PC-3 (cell line): ENCODE measurements at regions of chr3 and their contacts with region 1.

Region 1: GRCh38 chr3:187745201-187746058 is at the start of gene BCL6:
- DNase-seq: peak; percentile 98
- ATAC-seq: peak; percentile 34
- H3K4me3 ChIP-seq: peak within 1 kb of the TSS; percentile 93
- H3K27ac ChIP-seq: peak within 1 kb of the TSS; percentile 91
- H3K4me1 ChIP-seq: peaks cover 43% of the 10 kb centered on the region
- H3K27me3 ChIP-seq: no peaks in the 10 kb centered on the region
- CTCF ChIP-seq: no peak
- total RNA-seq, gene BCL6: 7.7 and 11.8 TPM in 2 replicates

Region 2: GRCh38 chr3:187398955-187399354 is 346.5 kb before region 1 on chr3:
- CTCF ChIA-PET with region 1: no interaction called
- POLR2A ChIA-PET with region 1: no interaction called
- intact Hi-C with region 1: no loop called
- DNase-seq: no peak
- ATAC-seq: no peak
- H3K4me3 ChIP-seq: no peak overlapping the region
- H3K27ac ChIP-seq: no peak overlapping the region
- H3K4me1 ChIP-seq: peaks cover 10% of the 10 kb centered on the region
- H3K27me3 ChIP-seq: peaks cover 20% of the 10 kb centered on the region
- CTCF ChIP-seq: no peak

Region 3: DNA sequence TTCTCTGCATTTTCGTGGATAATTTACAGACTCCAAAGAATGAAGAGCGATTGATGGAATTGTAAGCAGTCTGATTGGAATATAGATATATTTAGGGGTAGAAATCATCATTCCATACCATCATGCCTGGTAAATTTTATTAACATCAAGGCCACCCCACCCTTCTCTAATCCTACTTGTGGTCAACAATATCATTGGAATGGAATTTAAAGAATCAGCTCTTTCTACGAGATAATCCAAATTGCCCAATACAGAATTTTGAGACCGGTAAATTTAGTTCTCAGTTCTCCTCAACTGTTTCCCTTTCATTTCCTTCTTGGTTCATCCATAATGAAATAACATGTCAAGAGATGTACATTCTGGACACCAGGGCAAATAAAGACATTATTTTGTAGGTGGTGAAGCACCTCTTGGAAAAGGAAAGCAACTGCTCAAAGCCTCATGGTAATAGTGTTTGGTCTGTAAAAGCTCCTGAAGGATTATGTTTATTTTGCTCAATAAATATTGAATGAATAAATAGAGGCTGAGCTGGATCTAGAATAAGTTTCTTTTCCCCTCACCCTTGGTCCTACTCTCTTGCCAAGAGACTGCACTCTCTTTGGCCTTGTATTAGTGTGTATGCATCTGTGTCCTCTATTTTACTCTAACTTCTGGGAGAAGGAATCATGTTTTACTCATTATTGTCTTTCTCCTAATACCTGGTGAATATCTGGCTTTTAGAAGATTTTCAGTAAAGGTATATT is 133.5 kb after region 1 on chr3:
- CTCF ChIA-PET with region 1: interaction called, 4 read pairs
- POLR2A ChIA-PET with region 1: no interaction called
- intact Hi-C with region 1: loop called (anchors 2 kb)
- DNase-seq: peak; percentile 87
- ATAC-seq: peak; percentile 89
- H3K4me3 ChIP-seq: peak overlapping the region; percentile 54
- H3K27ac ChIP-seq: peak overlapping the region; percentile 56
- H3K4me1 ChIP-seq: peaks cover 40% of the 10 kb centered on the region
- H3K27me3 ChIP-seq: no peaks in the 10 kb centered on the region
- CTCF ChIP-seq: no peak

Region 4: DNA sequence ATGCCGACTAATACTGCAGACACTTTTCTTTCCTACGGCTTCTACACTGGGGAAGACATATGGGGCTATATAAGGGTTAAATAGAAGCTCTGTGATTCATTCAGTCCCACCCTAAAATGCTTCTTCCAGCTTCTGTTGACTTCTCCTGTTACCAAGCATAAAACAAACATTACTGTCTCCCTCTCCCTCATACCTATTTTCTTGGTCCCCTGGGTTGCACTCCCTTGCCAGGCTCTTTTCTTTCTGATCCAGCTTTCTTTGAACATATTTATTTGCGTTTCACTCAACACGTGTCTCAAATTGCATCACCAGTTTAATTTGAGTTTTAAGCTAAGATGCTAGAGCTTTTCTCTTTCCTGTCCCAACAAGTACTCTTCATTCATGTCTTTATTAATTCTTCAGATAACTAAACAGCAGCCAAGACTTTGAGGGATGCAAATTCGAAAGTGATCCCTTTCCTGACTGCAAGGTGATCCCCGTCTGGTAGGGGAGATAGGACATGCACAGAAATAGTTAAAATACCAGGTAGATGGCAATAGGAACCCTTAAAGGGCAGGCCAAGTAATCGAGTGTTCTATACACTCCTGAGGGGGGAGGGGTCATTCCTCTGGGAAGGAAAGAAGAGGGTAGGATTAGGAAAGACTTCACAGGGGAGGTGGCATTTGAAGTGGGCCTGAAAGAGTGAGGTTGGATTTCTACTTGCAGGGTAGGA is 198.4 kb after region 1 on chr3:
- CTCF ChIA-PET with region 1: interaction called, 8 read pairs
- POLR2A ChIA-PET with region 1: interaction called, 4 read pairs
- intact Hi-C with region 1: loop called (anchors 1 kb)
- DNase-seq: peak; percentile 85
- ATAC-seq: peak; percentile 87
- H3K4me3 ChIP-seq: peak overlapping the region; percentile 57
- H3K27ac ChIP-seq: peak overlapping the region; percentile 80
- H3K4me1 ChIP-seq: peaks cover 44% of the 10 kb centered on the region
- H3K27me3 ChIP-seq: no peaks in the 10 kb centered on the region
- CTCF ChIP-seq: no peak

Region 5: GRCh38 chr3:188133219-188133618 is 387.8 kb after region 1 on chr3:
- CTCF ChIA-PET with region 1: no interaction called
- POLR2A ChIA-PET with region 1: interaction called, 5 read pairs
- intact Hi-C with region 1: loop called (anchors 1 kb)
- DNase-seq: peak; percentile 53
- ATAC-seq: 0 out of 2 replicates have a peak, but pooled peaks have one; percentile 19
- H3K4me3 ChIP-seq: no peak overlapping the region
- H3K27ac ChIP-seq: peak overlapping the region; percentile 17; the same call in 1 of the 2 replicates
- H3K4me1 ChIP-seq: 0 out of 2 replicates have a peak, but pooled peaks cover 6% of the 10 kb centered on the region
- H3K27me3 ChIP-seq: no peaks in the 10 kb centered on the region
- CTCF ChIP-seq: no peak

Region 6: GRCh38 chr3:188230962-188231361 is 485.5 kb after region 1 on chr3:
- CTCF ChIA-PET with region 1: no interaction called
- POLR2A ChIA-PET with region 1: interaction called, 4 read pairs
- intact Hi-C with region 1: loop called (anchors 1 kb)
- DNase-seq: peak; percentile 85
- ATAC-seq: peak; percentile 65
- H3K4me3 ChIP-seq: no peak overlapping the region
- H3K27ac ChIP-seq: peak overlapping the region; percentile 78
- H3K4me1 ChIP-seq: peaks cover 51% of the 10 kb centered on the region
- H3K27me3 ChIP-seq: no peaks in the 10 kb centered on the region
- CTCF ChIP-seq: no peak

Region 7: GRCh38 chr3:188683032-188683521 is 937.6 kb after region 1 on chr3:
- CTCF ChIA-PET with region 1: interaction called, 18 read pairs
- POLR2A ChIA-PET with region 1: interaction called, 3 read pairs
- intact Hi-C with region 1: loop called (anchors 5 kb)
- DNase-seq: peak; percentile 59
- ATAC-seq: peak; percentile 66
- H3K4me3 ChIP-seq: no peak overlapping the region
- H3K27ac ChIP-seq: peak overlapping the region; percentile 29
- H3K4me1 ChIP-seq: peaks cover 20% of the 10 kb centered on the region
- H3K27me3 ChIP-seq: no peaks in the 10 kb centered on the region
- CTCF ChIP-seq: no peak